PC-3 (cell line): ENCODE measurements at regions of chr2 and their contacts with region 1.

Region 1: DNA sequence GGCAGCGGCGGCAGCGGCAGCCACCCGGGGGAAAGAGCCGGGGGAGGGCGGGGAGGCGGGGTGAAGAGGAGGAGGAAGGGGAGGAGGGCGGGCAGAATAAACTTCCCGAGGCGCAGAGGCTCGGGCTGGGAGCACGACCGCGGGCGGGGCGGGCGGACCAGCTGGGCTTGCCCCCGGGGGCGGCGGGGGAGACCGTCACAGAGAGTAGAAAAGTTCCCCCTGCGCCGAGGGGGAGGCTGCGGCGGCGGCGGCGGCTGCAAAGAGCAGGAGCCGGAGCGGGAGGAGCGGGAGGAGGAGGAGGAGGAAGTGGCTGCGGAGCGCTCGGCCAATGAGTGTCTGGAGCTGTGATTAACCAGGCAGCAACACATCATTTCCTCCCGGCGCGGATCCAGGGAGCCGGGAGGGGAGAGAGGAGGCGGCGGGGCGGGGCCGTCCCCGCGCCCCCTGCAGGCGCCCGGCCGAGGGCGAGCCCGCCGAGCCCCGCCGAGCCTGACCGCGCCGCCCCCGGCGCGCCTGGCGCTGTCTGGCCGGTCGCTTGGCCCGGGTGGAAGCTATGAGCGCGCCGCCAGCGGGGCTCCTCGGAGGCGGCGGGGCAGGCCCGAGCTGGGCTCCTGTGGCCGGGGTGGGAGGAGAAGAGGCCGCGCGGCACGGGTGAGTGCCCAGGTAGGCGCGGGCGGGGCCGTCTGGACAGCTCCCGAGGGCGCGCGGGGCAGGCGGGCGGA is at the start of gene ACVR1:
- DNase-seq: peak; percentile 97
- ATAC-seq: peak; percentile 82
- H3K4me3 ChIP-seq: peak within 1 kb of the TSS; percentile 87
- H3K27ac ChIP-seq: peak within 1 kb of the TSS; percentile 81
- H3K4me1 ChIP-seq: peaks cover 30% of the 10 kb centered on the region
- H3K27me3 ChIP-seq: no peaks in the 10 kb centered on the region
- CTCF ChIP-seq: no peak
- total RNA-seq, gene ACVR1: 6.7 and 9.0 TPM in 2 replicates

Region 2: GRCh38 chr2:157777427-157777826 is 98.8 kb before region 1 on chr2:
- CTCF ChIA-PET with region 1: no interaction called
- POLR2A ChIA-PET with region 1: no interaction called
- intact Hi-C with region 1: loop called (anchors 1 kb)
- DNase-seq: peak; percentile 77
- ATAC-seq: peak; percentile 37
- H3K4me3 ChIP-seq: no peak overlapping the region
- H3K27ac ChIP-seq: no peak overlapping the region
- H3K4me1 ChIP-seq: no peaks in the 10 kb centered on the region
- H3K27me3 ChIP-seq: no peaks in the 10 kb centered on the region
- CTCF ChIP-seq: peak; percentile 86

Region 3: GRCh38 chr2:157784169-157784822 is 91.9 kb before region 1 on chr2:
- CTCF ChIA-PET with region 1: no interaction called
- POLR2A ChIA-PET with region 1: interaction called, 3 read pairs
- intact Hi-C with region 1: loop called (anchors 1 kb)
- DNase-seq: peak; percentile 85
- ATAC-seq: peak; percentile 99
- H3K4me3 ChIP-seq: peak overlapping the region; percentile 56
- H3K27ac ChIP-seq: peak overlapping the region; percentile 77
- H3K4me1 ChIP-seq: peaks cover 19% of the 10 kb centered on the region
- H3K27me3 ChIP-seq: no peaks in the 10 kb centered on the region
- CTCF ChIP-seq: no peak

Region 4: GRCh38 chr2:157830696-157831570 is 45.3 kb before region 1 on chr2:
- CTCF ChIA-PET with region 1: no interaction called
- POLR2A ChIA-PET with region 1: interaction called, 3 read pairs
- intact Hi-C with region 1: loop called (anchors 5 kb)
- DNase-seq: peak; percentile 87
- ATAC-seq: peak; percentile 95
- H3K4me3 ChIP-seq: no peak overlapping the region
- H3K27ac ChIP-seq: peak overlapping the region; percentile 85
- H3K4me1 ChIP-seq: peaks cover 25% of the 10 kb centered on the region
- H3K27me3 ChIP-seq: no peaks in the 10 kb centered on the region
- CTCF ChIP-seq: no peak

Region 5: DNA sequence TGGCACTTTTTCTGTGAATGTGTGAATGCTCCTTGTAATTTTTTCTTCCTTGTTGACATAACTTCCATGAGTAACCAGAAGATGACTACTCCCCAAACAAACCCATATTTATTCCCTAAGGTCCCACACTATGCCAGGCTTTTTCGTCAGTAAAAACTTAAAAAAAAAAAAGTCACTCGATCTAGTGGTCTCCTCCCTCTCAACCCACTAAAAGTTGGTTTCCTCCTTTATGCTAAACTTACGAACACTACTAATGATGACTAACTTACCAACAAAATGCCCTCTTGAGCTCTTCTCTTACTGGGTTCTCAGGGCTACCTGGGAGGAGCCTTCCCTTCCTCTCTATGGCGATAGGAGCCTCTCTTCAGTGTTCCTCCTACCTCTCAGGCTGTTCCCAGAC is 18.3 kb before region 1 on chr2:
- CTCF ChIA-PET with region 1: no interaction called
- POLR2A ChIA-PET with region 1: interaction called, 8 read pairs
- intact Hi-C with region 1: loop called (anchors 1 kb)
- DNase-seq: peak; percentile 91
- ATAC-seq: peak; percentile 84
- H3K4me3 ChIP-seq: no peak overlapping the region
- H3K27ac ChIP-seq: peak overlapping the region; percentile 97
- H3K4me1 ChIP-seq: peaks cover 42% of the 10 kb centered on the region
- H3K27me3 ChIP-seq: no peaks in the 10 kb centered on the region
- CTCF ChIP-seq: no peak

Region 6: GRCh38 chr2:157901325-157901724 is 25.1 kb after region 1 on chr2:
- CTCF ChIA-PET with region 1: no interaction called
- POLR2A ChIA-PET with region 1: no interaction called
- intact Hi-C with region 1: no loop called
- DNase-seq: no peak
- ATAC-seq: no peak
- H3K4me3 ChIP-seq: no peak overlapping the region
- H3K27ac ChIP-seq: no peak overlapping the region
- H3K4me1 ChIP-seq: peaks cover 10% of the 10 kb centered on the region; the same call in 1 of the 2 replicates
- H3K27me3 ChIP-seq: no peaks in the 10 kb centered on the region
- CTCF ChIP-seq: peak; percentile 50